Right ventricle myocardium inferior (tissue), 1 donor: ENCODE measurements at regions of chr13 and their contacts with region 1.

Region 1: DNA sequence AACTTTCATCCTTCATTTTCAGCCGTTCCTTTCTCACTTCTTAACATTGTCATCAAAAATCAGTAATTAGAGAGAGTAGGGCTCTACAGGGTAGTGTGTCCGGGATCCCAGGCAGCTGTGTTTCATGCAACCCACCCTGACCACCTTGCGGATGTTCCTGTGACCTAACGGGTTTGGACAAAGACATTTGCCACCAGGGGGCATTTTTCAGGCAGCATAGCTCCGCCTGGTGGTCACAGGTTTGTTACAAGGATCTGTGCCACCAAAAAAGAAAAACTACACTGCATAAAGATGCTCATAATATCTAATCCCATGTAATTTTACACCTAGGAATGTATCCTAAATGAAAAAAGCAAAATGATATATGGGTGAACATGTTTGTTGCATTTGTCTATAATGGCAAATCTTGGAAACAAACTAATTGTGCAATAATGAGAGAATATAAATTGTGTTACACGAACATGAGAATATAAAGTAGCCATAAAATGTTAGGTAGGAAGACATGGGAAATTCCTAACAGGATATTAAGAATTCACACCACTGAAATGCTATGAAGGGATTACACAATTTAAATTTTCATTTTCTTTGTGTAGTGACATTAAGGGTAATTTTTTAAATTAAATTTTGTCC is 123.0 kb downstream of the SLC7A1 start:
- DNase-seq: no peak
- ATAC-seq: no peak

Region 2: GRCh38 chr13:29384466-29384865 is 88.0 kb before region 1 on chr13:
- intact Hi-C with region 1: loop called (anchors 10 kb)
- DNase-seq: no peak
- ATAC-seq: peak; percentile 94

Region 3: GRCh38 chr13:29428310-29429181 is 43.9 kb before region 1 on chr13:
- intact Hi-C with region 1: loop called (anchors 5 kb)
- DNase-seq: peak; percentile 77
- ATAC-seq: peak; percentile 92

Region 4: GRCh38 chr13:29454911-29455481 is 17.5 kb before region 1 on chr13:
- intact Hi-C with region 1: no loop called
- DNase-seq: peak; percentile 60
- ATAC-seq: peak; percentile 42

Region 5: GRCh38 chr13:29621051-29621757 is 148.8 kb after region 1 on chr13:
- intact Hi-C with region 1: no loop called
- DNase-seq: no peak
- ATAC-seq: no peak

Region 6: GRCh38 chr13:29763436-29764180 is 291.2 kb after region 1 on chr13:
- intact Hi-C with region 1: no loop called
- DNase-seq: no peak
- ATAC-seq: no peak